ENCODE measurements at regions of chr11 and their contacts with region 1.

Region 1: DNA sequence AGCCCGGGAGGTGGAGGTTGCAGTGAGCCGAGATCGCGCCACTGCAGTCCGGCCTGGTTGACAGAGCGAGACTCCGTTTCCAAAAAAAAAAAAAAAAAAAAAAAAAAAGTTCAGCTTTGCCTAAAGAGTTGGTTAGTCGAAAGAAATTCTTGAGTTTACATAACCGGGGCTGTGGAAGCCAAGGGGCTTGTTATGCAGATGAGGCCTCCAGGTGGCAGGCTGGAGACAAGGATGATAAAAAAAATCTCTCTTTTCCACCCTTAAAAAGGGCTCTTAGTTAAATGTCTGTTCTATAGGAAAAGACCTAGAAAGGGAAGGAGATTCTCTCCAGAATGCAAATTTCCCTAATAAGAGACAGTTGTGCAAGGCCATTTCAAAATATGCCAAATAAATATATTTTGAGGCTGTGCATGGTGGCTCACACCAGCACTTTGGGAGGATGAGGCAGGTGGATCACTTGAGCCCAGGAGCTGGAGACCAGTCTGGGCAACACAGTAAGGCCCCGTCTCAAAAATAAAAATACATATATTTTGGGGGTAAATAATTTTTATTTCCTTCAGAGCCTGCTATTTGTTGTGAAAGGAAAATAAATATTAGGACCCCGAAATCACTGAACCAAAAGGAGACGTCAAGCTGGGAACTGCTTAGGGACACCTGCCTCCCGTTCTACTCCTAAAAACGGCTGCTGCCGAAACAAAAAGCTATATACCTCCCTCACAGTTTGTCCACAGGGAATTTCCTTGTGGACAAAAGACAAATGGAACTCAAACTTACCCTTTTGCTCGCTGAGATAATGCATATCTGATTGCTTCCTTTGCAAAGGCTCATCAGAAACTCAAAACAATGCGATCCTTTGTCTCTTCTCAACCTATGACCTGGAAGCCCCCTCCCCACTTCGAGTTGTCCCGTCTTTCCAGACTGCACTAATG is 2.4 kb upstream of the IFITM2 start:
- DNase-seq: peak; percentile 81
- ATAC-seq: no peak
- H3K4me3 Mint-ChIP-seq: no peak overlapping the region
- H3K27ac Mint-ChIP-seq: no peak overlapping the region
- H3K4me1 Mint-ChIP-seq: peaks cover 46% of the 10 kb centered on the region
- H3K27me3 Mint-ChIP-seq: peaks cover 17% of the 10 kb centered on the region

Region 2: DNA sequence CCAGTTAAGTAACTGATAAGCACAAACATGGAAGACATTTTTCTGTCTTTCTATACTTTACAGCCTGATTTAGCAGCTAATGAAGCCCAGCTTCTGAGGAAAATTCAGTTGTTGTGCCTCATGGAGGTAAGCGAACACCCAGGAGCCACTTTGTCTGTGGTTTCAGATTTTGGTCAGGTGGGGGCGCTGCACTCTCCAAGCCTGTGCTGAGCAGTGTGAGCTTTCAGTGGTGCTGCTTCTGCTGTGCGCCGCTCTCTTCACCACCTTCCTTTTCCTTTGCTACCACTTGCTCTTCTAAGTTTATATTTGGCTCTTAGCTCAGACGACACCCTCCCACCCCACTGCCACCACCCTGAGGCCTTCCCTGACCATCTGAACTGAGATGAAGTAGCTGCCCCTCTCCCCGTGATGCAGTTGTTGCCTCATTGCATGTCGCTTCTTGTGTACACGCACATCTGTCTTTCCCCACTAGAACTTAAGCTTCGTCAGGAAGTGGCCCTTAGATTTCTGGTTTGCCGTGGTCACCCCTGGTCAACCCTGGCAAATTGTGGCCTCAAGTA is 54.4 kb before region 1 on chr11:
- CTCF ChIA-PET with region 1: interaction called, 26 read pairs
- DNase-seq: peak; percentile 83
- ATAC-seq: peak; percentile 97
- H3K4me3 Mint-ChIP-seq: no peak overlapping the region
- H3K27ac Mint-ChIP-seq: peak overlapping the region; percentile 49
- H3K4me1 Mint-ChIP-seq: peaks cover 12% of the 10 kb centered on the region
- H3K27me3 Mint-ChIP-seq: no peaks in the 10 kb centered on the region

Region 3: DNA sequence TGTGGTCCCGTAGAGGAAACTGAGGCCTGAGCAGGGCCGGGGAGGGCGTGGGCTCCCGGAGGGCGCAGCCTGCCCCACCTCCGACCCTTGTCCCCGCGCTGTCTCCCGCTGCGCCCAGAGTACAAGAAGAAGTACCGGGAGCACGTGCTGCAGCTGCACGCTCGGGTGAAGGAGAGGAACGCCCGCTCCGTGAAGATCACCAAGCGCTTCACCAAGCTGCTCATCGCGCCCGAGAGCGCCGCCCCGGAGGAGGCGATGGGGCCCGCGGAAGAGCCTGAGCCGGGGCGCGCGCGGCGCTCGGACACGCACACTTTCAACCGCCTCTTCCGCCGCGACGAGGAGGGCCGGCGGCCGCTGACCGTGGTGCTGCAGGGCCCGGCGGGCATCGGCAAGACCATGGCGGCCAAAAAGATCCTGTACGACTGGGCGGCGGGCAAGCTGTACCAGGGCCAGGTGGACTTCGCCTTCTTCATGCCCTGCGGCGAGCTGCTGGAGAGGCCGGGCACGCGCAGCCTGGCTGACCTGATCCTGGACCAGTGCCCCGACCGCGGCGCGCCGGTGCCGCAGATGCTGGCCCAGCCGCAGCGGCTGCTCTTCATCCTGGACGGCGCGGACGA is 25.1 kb before region 1 on chr11:
- CTCF ChIA-PET with region 1: interaction called, 23 read pairs
- DNase-seq: peak; percentile 59
- ATAC-seq: peak; percentile 59
- H3K4me3 Mint-ChIP-seq: peak overlapping the region; percentile 50
- H3K27ac Mint-ChIP-seq: no peak overlapping the region
- H3K4me1 Mint-ChIP-seq: peaks cover 46% of the 10 kb centered on the region
- H3K27me3 Mint-ChIP-seq: peaks cover 61% of the 10 kb centered on the region

Region 4: GRCh38 chr11:293847-294661 is 11.1 kb before region 1 on chr11:
- CTCF ChIA-PET with region 1: interaction called, 27 read pairs
- DNase-seq: no peak
- ATAC-seq: no peak
- H3K4me3 Mint-ChIP-seq: no peak overlapping the region
- H3K27ac Mint-ChIP-seq: no peak overlapping the region
- H3K4me1 Mint-ChIP-seq: peaks cover 49% of the 10 kb centered on the region
- H3K27me3 Mint-ChIP-seq: no peaks in the 10 kb centered on the region

Region 5: GRCh38 chr11:355581-356458 is 50.6 kb after region 1 on chr11:
- CTCF ChIA-PET with region 1: interaction called, 11 read pairs
- DNase-seq: peak; percentile 88
- ATAC-seq: peak; percentile 70
- H3K4me3 Mint-ChIP-seq: peak overlapping the region; percentile 64
- H3K27ac Mint-ChIP-seq: peak overlapping the region; percentile 65
- H3K4me1 Mint-ChIP-seq: peaks cover 36% of the 10 kb centered on the region
- H3K27me3 Mint-ChIP-seq: peaks cover 30% of the 10 kb centered on the region

Region 6: GRCh38 chr11:396948-397548 is 91.9 kb after region 1 on chr11:
- CTCF ChIA-PET with region 1: interaction called, 18 read pairs
- DNase-seq: peak; percentile 74
- ATAC-seq: peak; percentile 86
- H3K4me3 Mint-ChIP-seq: no peak overlapping the region
- H3K27ac Mint-ChIP-seq: no peak overlapping the region
- H3K4me1 Mint-ChIP-seq: no peaks in the 10 kb centered on the region
- H3K27me3 Mint-ChIP-seq: no peaks in the 10 kb centered on the region

Measured in activated CD8-positive, alpha-beta memory T cell treated with anti-CD3 and anti-CD28 coated beads, Interleukin-2, amount 10 ng/mL, durations not matched to agents 7 days and 5 days (primary cell).